Activated T-helper 2 cell treated with anti-CD3 and anti-CD28 coated beads, Interferon-gamma antibody, Interleukin-2, Interleukin-4, amounts not matched to agents 10 μg/mL and 5 μg/mL and 100 μg/mL, durations not matched to agents 14 hours and 24 hours and 36 hours (primary cell): ENCODE measurements at regions of chr21 and their contacts with region 1.

Region 1: DNA sequence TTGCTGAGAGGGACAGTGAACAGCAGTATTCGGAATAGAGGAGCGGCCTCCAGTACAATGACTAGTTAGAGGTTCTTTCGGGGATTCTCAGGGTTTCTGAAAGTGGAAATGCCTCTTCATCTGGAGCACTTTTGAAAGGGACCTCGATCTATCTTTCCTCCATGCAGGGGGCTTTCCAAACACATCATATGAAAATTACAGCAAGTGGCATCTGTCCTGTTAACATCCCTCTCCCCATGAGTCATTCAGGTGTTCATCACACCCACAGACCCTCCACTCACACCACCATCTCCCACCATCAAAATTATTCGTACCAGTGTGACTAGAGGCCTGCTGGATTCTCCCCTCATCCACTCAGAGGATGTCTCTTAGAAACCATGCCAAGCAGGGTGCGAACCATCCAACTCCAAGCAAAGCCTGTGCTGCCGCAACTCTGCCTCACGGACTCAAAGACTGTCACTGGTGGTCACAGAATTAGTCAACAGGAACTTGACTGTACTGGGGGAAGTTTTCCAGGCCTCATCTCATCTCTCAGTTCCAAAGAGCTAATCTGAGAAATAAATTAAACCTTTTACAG is 211.1 kb downstream of the MRPL39 start:
- DNase-seq: peak; percentile 48
- H3K4me3 Mint-ChIP-seq: peak overlapping the region; percentile 2
- H3K27ac Mint-ChIP-seq: peak overlapping the region; percentile 88
- H3K4me1 Mint-ChIP-seq: peaks cover 17% of the 10 kb centered on the region
- H3K27me3 Mint-ChIP-seq: no peaks in the 10 kb centered on the region

Region 2: DNA sequence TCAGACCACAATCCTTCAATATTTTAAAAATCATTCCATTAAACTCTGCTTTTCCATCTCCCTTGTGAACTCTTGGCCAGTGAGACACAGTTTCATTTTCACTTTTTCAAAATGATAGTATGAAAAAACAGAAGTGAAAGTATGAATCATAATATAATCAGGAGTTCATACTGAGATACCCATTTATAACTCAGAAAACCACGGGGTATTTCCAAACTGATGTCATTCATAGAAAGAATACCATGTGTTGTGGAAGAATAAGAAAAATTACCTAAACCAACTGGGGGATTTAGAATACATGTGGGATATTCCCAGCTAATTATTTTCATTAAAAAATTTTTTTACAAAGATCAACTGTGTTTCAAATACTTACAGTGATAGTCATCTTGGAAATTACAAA is 61.2 kb after region 1 on chr21:
- intact Hi-C with region 1: loop called (anchors 1 kb)
- DNase-seq: no peak
- H3K4me3 Mint-ChIP-seq: peak overlapping the region; percentile 58
- H3K27ac Mint-ChIP-seq: peak overlapping the region; percentile 84
- H3K4me1 Mint-ChIP-seq: peaks cover 50% of the 10 kb centered on the region
- H3K27me3 Mint-ChIP-seq: no peaks in the 10 kb centered on the region